ENCODE measurements at regions of chr1 and their contacts with region 1.

Region 1: GRCh38 chr1:164558461-164559341 is at the start of gene PBX1:
- DNase-seq: peak; percentile 99
- H3K4me3 ChIP-seq: peak within 1 kb of the TSS; percentile 61 to 94 (median 73)
- H3K27ac ChIP-seq: peak within 1 kb of the TSS; percentile 69
- H3K4me1 ChIP-seq: no peaks in the 10 kb centered on the region
- H3K27me3 ChIP-seq: no peaks in the 10 kb centered on the region
- CTCF ChIP-seq: no peak
- total RNA-seq, gene PBX1: 10.2 to 14.8 TPM

Region 2: DNA sequence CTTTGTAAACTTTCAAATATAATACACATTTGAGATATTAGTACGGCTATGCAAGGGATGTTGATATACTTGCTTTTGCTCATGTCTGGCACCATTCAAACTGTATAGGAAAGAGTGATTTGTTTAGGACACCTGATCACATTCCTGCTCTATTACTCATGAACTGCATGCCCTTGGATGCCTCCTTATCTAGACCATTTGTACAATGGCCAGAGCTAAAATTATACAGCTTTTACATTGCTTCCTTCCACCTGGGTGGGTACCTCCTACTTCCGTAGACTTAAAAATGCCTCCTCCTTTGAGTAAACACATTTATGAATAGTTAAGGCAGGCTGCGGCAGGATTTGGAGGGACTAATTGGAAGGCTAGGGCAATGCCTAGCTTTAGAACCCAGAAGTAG is 85.2 kb before region 1 on chr1:
- CTCF ChIA-PET with region 1: interaction called, 21 read pairs
- dilution Hi-C with region 1: no loop called
- in situ Hi-C with region 1: no loop called
- intact Hi-C with region 1: no loop called
- DNase-seq: no peak
- H3K4me3 ChIP-seq: no peak overlapping the region
- H3K27ac ChIP-seq: no peak overlapping the region
- H3K4me1 ChIP-seq: no peaks in the 10 kb centered on the region
- H3K27me3 ChIP-seq: no peaks in the 10 kb centered on the region
- CTCF ChIP-seq: no peak

Region 3: GRCh38 chr1:164602480-164603093 is 43.9 kb after region 1 on chr1:
- CTCF ChIA-PET with region 1: interaction called, 10 read pairs
- dilution Hi-C with region 1: no loop called
- in situ Hi-C with region 1: no loop called
- intact Hi-C with region 1: loop called (anchors 1 kb)
- DNase-seq: no peak
- H3K4me3 ChIP-seq: no peak overlapping the region
- H3K27ac ChIP-seq: peak overlapping the region; percentile 25
- H3K4me1 ChIP-seq: peaks cover 25% of the 10 kb centered on the region
- H3K27me3 ChIP-seq: no peaks in the 10 kb centered on the region
- CTCF ChIP-seq: peak in 1 of 2 donors; percentile 22

Region 4: DNA sequence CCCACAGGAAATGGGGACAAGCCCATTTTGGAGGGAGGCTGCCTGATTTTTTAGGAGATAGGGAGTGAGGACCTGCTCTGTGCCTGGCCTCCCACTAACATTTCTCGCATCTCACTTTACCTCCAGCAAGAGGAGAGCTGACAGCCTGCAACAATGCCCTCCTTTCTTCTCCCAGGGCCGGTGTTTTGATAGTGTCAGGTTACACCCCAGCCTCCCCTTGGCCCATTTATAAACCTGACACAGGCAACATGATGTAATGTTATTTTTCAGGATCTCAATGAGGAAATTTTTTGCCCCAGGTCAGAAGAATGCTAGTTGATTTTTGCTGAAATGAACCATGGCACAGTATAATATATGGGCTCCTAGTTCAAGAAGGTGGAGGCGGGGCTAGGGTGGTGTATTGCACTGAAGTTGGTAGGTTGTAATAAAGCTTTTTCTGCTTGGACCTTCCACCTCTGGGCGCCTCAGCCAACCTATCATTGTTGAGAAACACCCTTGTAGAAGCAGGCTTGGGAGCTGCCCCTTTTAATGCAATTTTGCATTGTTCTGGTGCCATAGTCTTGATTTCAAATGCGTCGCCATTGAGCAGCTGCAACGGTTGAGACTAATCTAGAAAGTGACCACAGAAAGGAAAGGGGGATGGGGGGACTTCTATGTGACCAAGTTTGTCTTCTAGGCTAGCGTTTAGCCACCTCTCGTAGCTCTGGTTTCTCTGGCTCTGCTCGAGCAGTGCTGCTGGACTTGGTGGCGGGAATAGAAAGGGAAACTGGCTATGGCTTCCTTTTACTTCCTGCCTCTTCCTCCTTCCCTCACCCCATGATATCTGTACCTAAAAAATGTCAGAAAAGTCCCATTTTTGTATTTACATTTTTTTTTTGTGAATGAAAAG is 53.3 kb after region 1 on chr1:
- CTCF ChIA-PET with region 1: no interaction called
- dilution Hi-C with region 1: no loop called
- in situ Hi-C with region 1: no loop called
- intact Hi-C with region 1: loop called (anchors 1 kb)
- DNase-seq: peak; percentile 92
- H3K4me3 ChIP-seq: no peak overlapping the region
- H3K27ac ChIP-seq: peak overlapping the region; percentile 45
- H3K4me1 ChIP-seq: peaks cover 31% of the 10 kb centered on the region
- H3K27me3 ChIP-seq: no peaks in the 10 kb centered on the region
- CTCF ChIP-seq: no peak

Region 5: DNA sequence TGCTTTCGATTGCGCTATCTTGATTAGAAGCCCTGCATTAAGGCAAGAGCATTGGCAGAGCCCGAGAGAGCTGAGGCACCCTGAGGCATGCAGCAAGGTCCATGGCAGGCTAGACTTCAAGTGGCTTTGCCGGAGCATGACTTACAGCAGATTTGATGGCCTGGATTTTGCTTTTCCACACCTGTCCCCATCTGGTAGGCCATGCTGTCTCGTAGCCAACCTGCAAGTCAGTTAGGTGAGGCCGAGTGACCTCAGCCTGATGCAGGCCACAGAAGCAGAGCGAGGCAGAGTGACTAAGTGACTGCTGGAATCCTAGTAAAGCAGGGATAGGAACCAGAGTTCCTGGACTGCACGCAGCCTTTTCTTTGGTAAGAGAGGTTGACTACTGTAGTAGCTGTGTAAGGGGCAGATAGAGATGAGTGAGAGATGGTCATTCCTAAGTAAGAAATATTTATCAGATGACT is 149.2 kb after region 1 on chr1:
- CTCF ChIA-PET with region 1: no interaction called
- dilution Hi-C with region 1: no loop called
- in situ Hi-C with region 1: no loop called
- intact Hi-C with region 1: loop called (anchors 10 kb)
- DNase-seq: peak; percentile 83
- H3K4me3 ChIP-seq: no peak overlapping the region
- H3K27ac ChIP-seq: no peak overlapping the region
- H3K4me1 ChIP-seq: peaks cover 22% of the 10 kb centered on the region
- H3K27me3 ChIP-seq: no peaks in the 10 kb centered on the region
- CTCF ChIP-seq: no peak

Measured in mammary epithelial cell (primary cell).